HAP-1 (cell line): ENCODE measurements at regions of chr9 and their contacts with region 1.

Region 1: GRCh38 chr9:18824095-18824666 is 208.8 kb downstream of the SAXO1 start:
- DNase-seq: no peak
- H3K4me3 ChIP-seq: no peak overlapping the region
- H3K4me1 ChIP-seq: no peaks in the 10 kb centered on the region; the same call in 1 of the 2 replicates
- H3K27me3 ChIP-seq: no peaks in the 10 kb centered on the region

Region 2: DNA sequence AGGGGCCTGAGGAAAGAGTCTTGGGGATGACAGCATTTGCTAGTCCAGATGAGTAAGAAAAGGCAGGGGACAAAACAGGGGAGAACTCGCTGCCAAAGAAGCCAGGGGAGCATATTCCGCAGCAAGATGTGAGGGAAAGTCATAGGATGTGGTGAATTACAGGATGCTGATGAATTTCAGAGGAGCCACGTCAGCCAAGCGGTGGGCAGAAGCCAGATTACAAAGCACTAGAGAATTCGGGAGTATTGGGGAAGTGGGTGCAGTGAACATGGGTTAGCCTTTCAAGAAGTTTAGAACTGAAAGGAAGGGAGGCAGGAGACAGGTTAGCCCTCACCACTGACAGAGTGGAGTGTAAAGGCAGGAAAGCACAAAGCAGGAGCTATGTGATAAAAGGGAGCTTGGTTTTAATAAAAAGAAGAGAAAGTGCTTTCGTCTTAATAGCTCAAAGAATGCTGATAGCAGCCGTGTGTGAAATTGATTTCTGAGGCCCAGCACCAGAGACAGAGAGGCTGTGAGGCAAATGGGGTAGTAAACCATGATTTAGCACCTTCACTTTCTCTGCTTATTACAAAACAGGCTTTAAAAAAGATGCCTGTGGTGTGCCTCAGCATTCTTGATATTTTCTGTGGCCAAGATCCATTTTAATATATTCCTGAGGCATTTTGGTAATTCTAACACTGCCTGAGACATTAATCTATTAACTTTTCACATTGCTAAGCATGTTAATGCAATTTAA is 333.4 kb before region 1 on chr9:
- in situ Hi-C with region 1: no loop called
- DNase-seq: no peak
- H3K4me3 ChIP-seq: no peak overlapping the region
- H3K4me1 ChIP-seq: peaks cover 9% of the 10 kb centered on the region
- H3K27me3 ChIP-seq: no peaks in the 10 kb centered on the region

Region 3: DNA sequence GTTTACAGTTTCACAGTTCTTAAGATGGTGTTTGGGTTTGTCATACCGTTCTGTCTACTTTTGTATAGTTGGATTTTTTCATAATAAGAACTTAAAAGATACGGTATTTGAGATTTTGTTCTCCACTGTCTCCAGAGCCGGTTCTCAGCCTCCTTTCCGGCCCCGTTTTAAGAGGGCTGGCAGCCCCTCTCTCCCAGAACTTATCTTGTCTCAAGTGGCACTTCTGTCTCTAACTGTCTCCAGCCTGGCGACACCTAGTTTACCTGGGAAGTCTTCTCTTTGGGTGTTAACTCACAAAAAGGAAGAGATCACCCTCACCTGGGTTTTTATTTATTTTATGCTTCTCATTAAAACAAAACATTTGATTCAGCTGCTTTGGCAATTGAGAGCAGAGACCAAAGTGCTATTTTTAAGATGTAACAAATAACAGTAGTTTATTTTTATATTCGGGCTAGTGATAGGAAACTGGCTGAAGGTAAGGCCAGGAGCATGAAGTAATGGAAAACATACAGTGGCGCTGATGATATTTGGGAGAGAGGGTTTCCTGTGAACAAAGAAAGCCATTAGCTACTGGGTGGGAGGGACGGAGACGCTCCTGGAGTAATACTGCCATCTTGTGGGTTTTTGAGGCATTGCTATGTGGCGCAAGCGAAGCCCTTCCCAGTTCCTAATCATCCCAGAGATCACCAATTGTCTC is 633.0 kb after region 1 on chr9:
- in situ Hi-C with region 1: loop called (anchors 25 kb)
- DNase-seq: peak; percentile 69 to 71
- H3K4me3 ChIP-seq: no peak overlapping the region
- H3K4me1 ChIP-seq: peaks cover 6% of the 10 kb centered on the region; the same call in 1 of the 2 replicates
- H3K27me3 ChIP-seq: no peaks in the 10 kb centered on the region